ENCODE measurements at regions of chr2 and their contacts with region 1.

Region 1: DNA sequence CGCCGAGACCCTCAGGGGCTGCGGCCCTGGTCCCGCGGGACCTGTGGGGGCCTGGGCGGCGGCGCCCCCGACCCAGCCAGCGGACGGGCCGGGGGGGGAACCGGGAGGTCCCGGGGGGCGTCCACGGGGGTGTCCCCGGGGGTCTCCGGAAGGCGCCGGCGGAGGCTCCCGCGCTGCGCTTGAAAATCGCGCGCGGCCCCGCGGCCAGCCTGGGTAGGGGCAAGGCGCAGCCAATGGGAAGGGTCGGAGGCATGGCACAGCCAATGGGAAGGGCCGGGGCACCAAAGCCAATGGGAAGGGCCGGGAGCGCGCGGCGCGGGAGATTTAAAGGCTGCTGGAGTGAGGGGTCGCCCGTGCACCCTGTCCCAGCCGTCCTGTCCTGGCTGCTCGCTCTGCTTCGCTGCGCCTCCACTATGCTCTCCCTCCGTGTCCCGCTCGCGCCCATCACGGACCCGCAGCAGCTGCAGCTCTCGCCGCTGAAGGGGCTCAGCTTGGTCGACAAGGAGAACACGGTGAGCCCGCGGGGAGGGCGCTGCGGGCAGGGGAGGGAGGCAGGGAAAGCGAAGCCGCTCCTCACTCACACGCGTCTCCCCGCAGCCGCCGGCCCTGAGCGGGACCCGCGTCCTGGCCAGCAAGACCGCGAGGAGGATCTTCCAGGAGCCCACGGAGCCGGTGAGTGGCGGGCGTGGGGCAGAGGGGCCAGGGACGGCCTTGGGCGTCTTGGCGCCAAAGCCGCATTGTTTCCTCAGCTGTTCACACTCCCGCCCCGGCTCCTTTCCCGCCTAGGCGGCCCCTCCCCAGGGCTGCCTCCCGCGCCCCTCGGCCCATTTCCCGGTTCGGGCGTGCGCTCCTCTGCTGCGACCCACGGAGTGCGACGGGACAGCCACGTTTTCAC is at the start of gene RRM2:
- DNase-seq: peak; percentile 90 to 94
- H3K4me3 ChIP-seq: peak within 1 kb of the TSS; percentile 48 to 73
- H3K27ac ChIP-seq: no peak within 1 kb of the TSS
- H3K4me1 ChIP-seq: peaks cover 0 to 38% (median 26%) of the 10 kb centered on the region in 4 donors
- H3K27me3 ChIP-seq: peaks cover 0 to 19% of the 10 kb centered on the region in 2 donors
- CTCF ChIP-seq: no peak

Region 2: GRCh38 chr2:10170256-10170655 is 47.6 kb after region 1 on chr2:
- intact Hi-C with region 1: no loop called
- DNase-seq: no peak
- H3K4me3 ChIP-seq: no peak overlapping the region
- H3K27ac ChIP-seq: no peak overlapping the region
- H3K4me1 ChIP-seq: no peaks in the 10 kb centered on the region
- H3K27me3 ChIP-seq: no peaks in the 10 kb centered on the region
- CTCF ChIP-seq: no peak

Region 3: DNA sequence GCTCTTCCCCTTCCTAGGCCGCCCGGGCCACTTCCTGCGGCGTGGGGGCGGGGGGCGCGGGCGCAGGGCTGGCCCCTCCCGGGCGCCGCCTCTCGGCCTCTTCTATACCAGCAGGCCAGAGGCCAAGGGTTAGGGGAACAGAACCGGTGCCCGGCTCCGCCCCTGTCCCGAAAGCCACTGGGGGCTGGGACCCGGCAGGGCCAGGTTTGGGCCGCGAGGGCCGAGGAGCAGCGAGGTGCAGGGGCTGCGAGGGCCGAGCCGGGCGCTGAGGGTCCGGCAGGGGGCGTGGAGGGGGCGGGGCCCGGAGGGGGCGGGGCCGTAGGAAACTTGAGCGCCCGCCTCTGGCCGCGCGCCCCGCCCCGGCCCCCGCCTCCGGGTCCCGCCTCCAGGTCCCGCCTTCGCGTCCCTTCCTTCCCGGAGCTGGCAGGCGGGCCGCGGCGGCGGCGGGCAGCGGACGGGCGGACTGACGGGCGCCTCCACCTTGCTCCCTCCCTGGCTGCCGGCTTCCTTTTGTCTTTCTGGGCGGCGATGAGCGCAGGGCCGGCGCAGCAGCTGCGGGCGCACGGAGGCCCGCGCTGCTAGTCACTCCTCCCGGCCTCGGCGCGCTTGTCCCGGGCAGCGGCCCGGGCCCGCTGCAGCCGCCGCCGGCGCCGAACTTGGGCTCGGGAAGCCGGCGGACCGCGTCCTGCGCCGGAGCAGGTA is 180.0 kb after region 1 on chr2 and contains the start of gene HPCAL1:
- intact Hi-C with region 1: loop called (anchors 5 kb)
- DNase-seq: peak; percentile 73 to 89
- H3K4me3 ChIP-seq: peak within 1 kb of the TSS; percentile 76 to 94
- H3K27ac ChIP-seq: peak within 1 kb of the TSS; percentile 74 to 77
- H3K4me1 ChIP-seq: peaks cover 0 to 30% (median 20%) of the 10 kb centered on the region in 4 donors
- H3K27me3 ChIP-seq: no peaks in the 10 kb centered on the region
- CTCF ChIP-seq: peak; percentile 49 to 51